Astrocyte of the cerebellum (primary cell): ENCODE measurements at regions of chr20 and their contacts with region 1.

Region 1: GRCh38 chr20:57649617-57650015 is 29.4 kb upstream of the ZBP1 start:
- DNase-seq: no peak
- H3K4me3 ChIP-seq: no peak overlapping the region
- CTCF ChIP-seq: no peak

Region 2: GRCh38 chr20:58179432-58180099 is 530.0 kb after region 1 on chr20:
- in situ Hi-C with region 1: loop called (anchors 5 kb)
- DNase-seq: peak; percentile 15
- H3K4me3 ChIP-seq: peak overlapping the region; percentile 14
- CTCF ChIP-seq: peak; percentile 87